ENCODE measurements at regions of chr5 and their contacts with region 1.

Region 1: DNA sequence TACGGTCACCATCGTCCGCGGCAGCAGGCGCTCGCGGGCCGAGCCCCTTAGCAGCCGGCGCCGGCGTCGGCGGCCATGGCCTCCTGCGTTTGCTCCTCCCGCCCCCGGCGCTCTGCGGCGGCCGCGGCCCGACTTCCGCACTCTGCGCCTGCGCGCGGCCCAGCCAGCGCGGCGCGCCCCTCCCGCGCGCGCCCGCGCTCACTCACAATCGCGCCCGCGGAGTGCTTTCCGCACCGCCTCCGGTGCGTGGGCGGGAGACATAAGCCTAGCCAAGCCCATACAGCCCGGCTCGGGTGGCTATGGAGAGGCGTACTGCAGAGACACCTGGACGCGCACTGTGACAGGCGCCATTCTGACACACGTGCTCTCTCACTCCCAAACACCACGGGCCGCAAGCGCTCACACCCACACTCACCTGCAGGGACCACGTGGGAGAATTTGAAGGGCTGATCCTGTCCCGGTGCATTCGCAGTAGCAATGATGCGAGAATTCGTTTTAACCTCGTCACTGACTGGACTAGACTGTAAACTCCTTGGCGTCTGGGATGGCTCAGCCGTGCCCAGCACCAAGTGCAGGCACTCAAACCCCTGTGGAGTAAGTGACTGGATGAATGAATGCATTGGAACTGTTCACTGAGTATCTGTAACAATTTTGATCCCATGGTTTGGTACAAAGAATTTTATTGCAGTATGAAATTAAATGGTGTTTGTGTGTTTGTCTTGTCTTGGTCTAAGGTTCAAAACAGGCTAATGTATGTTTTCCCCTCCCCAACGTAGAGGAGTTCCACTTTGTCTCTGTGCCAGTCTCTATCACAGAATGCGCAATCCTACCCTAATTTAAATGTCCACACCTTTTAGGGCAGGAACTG is at the start of gene RNF145:
- DNase-seq: peak; percentile 94
- H3K4me3 Mint-ChIP-seq: peak within 1 kb of the TSS; percentile 99
- H3K27ac Mint-ChIP-seq: peak within 1 kb of the TSS; percentile 100
- H3K4me1 Mint-ChIP-seq: peaks cover 25% of the 10 kb centered on the region
- H3K27me3 Mint-ChIP-seq: no peaks in the 10 kb centered on the region
- total RNA-seq, gene RNF145: 91.4 to 92.6 TPM

Region 2: DNA sequence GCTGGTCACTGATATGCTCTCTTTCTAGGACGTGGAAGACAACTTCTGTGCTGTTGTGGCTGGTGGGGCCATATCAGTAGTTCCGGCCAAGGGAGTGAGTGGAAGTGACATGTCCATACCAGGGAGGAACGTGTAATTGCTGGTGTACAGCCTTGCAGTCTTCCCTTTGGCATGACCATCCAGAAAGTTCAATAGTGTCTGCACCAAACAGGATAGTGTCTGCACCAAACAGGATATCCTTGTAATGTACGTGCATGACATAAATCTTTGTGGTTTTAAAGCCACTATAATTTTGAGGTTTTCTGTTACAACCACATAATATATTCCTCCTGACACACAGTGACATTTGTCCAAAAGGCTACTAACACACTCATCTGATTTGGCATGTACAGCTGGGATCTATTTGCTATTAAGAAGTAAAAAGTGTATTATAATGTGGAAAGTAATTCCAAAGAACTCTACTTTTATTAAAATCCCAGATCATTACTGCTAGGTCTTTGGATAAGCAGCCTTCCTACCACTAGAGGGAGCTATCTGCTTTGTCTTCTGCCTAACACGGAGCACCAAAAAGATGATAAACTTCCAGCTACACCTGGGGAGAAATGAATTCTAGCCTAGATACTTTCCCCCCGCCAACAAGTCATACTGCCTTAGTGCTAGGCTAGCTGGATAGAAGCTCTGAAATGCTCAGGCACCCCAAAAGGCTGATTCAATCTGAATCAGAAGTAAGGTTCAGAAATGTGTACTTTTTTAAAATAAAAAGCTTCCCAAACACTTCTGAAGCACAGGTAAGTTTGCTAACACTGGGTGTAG is 53.0 kb before region 1 on chr5:
- CTCF ChIA-PET with region 1: interaction called, 34 read pairs
- POLR2A ChIA-PET with region 1: interaction called, 28 read pairs
- intact Hi-C with region 1: no loop called
- DNase-seq: no peak
- H3K4me3 Mint-ChIP-seq: no peak overlapping the region
- H3K27ac Mint-ChIP-seq: peak overlapping the region; percentile 38
- H3K4me1 Mint-ChIP-seq: peaks cover 32% of the 10 kb centered on the region
- H3K27me3 Mint-ChIP-seq: no peaks in the 10 kb centered on the region

Region 3: GRCh38 chr5:159178978-159179377 is 30.7 kb before region 1 on chr5:
- CTCF ChIA-PET with region 1: no interaction called
- POLR2A ChIA-PET with region 1: interaction called, 10 read pairs
- intact Hi-C with region 1: loop called (anchors 1 kb)
- DNase-seq: peak; percentile 56
- H3K4me3 Mint-ChIP-seq: peak overlapping the region; percentile 3
- H3K27ac Mint-ChIP-seq: peak overlapping the region; percentile 93
- H3K4me1 Mint-ChIP-seq: peaks cover 87% of the 10 kb centered on the region
- H3K27me3 Mint-ChIP-seq: no peaks in the 10 kb centered on the region

Region 4: GRCh38 chr5:159240301-159240870 is 30.7 kb after region 1 on chr5:
- CTCF ChIA-PET with region 1: no interaction called
- POLR2A ChIA-PET with region 1: no interaction called
- intact Hi-C with region 1: loop called (anchors 1 kb)
- DNase-seq: peak; percentile 25
- H3K4me3 Mint-ChIP-seq: no peak overlapping the region
- H3K27ac Mint-ChIP-seq: peak overlapping the region; percentile 44
- H3K4me1 Mint-ChIP-seq: peaks cover 42% of the 10 kb centered on the region
- H3K27me3 Mint-ChIP-seq: no peaks in the 10 kb centered on the region

Region 5: GRCh38 chr5:159341914-159342313 is 132.2 kb after region 1 on chr5:
- CTCF ChIA-PET with region 1: interaction called, 3 read pairs
- POLR2A ChIA-PET with region 1: no interaction called
- intact Hi-C with region 1: loop called (anchors 5 kb)
- DNase-seq: peak; percentile 74
- H3K4me3 Mint-ChIP-seq: no peak overlapping the region
- H3K27ac Mint-ChIP-seq: no peak overlapping the region
- H3K4me1 Mint-ChIP-seq: peaks cover 59% of the 10 kb centered on the region
- H3K27me3 Mint-ChIP-seq: no peaks in the 10 kb centered on the region

Region 6: DNA sequence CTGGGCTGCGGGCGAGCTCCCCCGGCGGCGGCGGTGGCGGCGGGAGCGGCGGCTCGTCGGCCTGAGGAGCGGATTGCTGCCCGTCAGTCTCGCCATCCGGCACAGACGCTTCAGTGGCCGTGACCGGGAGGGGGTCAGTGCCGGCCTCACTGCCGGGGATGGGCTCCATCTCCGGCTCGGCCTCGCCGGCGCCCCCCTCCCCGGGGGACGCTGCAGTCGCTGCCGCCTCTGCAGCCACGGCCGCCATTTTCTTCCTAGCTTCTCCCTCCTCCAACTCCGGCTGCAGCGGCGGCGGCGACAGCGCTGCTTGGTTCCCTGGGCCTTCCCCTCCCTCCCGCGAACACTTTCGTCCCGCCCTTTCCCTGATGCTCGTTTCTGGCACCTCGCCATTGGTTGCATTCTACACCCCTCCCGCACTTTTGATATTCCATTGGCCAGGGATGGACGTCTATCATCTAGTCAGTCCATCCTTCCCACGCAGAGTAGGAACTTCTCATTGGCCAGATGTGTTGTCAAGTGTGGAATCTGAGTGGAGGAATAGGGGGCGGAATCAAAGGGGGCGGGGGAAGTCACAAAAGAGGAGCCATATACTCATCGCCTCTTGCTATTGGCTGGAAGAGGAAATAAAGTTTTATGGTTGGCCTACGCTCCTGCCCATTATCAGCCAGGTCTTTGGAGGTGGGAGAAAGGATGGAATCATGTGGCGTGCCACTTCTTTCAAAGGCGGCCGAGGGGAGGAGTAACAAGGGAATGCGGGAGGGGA is 909.7 kb after region 1 on chr5 and contains the start of gene PWWP2A:
- CTCF ChIA-PET with region 1: no interaction called
- POLR2A ChIA-PET with region 1: interaction called, 3 read pairs
- intact Hi-C with region 1: loop called (anchors 1 kb)
- DNase-seq: peak; percentile 98
- H3K4me3 Mint-ChIP-seq: peak within 1 kb of the TSS; percentile 97
- H3K27ac Mint-ChIP-seq: peak within 1 kb of the TSS; percentile 96
- H3K4me1 Mint-ChIP-seq: peaks cover 10% of the 10 kb centered on the region
- H3K27me3 Mint-ChIP-seq: no peaks in the 10 kb centered on the region
- total RNA-seq, gene PWWP2A: 15.7 to 17.4 TPM

Measured in activated CD4-positive, alpha-beta memory T cell treated with anti-CD3 and anti-CD28 coated beads for 36 hours (primary cell).